ENCODE measurements at regions of chr1 and their contacts with region 1.

Region 1: DNA sequence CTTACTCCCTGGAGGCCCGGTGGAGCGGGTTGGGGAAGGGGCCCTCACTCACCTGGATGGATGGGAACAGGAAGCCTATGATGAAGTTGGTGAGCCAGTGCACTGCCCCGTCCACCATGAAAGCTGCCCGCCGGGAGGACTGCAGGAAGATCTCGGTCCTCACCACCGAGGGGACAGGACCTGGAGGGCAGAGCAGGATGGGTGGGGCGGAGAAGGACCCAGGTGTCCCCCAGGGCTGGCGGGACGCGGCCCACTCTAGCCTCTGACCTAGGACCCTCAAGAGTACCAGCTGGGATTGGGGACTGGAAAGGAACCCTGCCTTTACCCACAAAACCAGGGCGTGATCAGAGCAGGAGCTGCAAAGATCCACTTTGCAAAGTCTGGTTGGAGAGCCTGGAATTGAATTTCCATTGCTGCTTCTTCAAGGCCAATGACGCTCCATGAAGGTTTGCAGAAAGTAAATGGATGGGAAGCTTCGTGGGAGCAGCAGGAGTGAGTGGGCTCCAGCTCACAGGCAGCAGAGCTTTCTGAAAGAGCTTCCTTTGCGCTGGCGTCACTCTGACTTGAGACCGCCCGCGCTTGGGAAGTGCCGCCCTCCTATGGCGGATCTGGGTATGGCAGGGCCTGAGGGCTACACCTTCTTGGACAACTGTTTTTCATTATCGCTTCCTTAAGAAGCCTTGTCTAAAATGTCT is 21.4 kb downstream of the SLC2A7 start:
- DNase-seq: peak; percentile 92
- ATAC-seq: peak; percentile 87
- H3K4me3 Mint-ChIP-seq: peak overlapping the region; percentile 70
- H3K27ac Mint-ChIP-seq: peak overlapping the region; percentile 73
- H3K4me1 Mint-ChIP-seq: peaks cover 22% of the 10 kb centered on the region
- H3K27me3 Mint-ChIP-seq: peaks cover 9% of the 10 kb centered on the region

Region 2: DNA sequence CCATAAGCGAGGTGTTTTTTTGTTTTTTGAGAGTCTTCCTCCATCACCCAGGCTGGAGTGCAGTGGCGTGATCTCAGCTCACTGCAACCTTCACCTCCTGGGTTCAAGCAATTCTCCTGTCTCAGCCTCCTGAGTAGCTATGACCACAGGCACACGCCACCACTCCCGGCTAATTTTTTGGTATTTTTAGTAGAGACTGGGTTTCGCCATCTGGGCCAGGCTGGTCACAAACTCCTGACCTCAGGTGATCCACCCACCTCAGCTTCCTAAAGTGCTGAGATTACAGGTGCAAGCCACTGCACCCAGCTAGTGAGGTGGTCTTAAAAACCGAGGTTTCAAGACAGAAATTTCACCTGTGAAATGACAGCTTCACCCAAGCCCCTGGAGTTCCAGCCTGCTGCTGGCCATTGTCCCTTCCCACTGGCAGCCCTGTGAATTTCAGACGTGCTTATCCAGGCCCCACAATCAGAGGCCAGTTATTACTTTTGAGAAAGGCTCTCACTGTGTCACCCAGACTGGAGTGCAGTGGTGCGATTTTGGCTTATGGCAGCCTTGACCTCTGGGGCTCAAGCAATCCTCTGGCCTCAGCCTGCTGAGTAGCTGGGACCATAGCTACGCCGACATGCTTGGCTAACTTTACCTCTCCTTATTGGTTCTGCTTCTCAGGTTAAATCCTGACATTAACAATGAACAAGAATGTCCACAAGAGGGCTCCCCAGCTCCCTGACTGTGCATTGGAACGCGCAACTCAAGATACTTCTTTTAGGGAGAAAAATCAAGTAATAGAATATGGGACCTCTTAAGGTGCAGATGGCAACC is 145.8 kb before region 1 on chr1:
- CTCF ChIA-PET with region 1: interaction called, 155 read pairs
- POLR2A ChIA-PET with region 1: interaction called, 4 read pairs
- DNase-seq: peak; percentile 74
- ATAC-seq: peak; percentile 52
- H3K4me3 Mint-ChIP-seq: peak overlapping the region; percentile 42
- H3K27ac Mint-ChIP-seq: peak overlapping the region; percentile 77
- H3K4me1 Mint-ChIP-seq: peaks cover 64% of the 10 kb centered on the region
- H3K27me3 Mint-ChIP-seq: no peaks in the 10 kb centered on the region

Region 3: DNA sequence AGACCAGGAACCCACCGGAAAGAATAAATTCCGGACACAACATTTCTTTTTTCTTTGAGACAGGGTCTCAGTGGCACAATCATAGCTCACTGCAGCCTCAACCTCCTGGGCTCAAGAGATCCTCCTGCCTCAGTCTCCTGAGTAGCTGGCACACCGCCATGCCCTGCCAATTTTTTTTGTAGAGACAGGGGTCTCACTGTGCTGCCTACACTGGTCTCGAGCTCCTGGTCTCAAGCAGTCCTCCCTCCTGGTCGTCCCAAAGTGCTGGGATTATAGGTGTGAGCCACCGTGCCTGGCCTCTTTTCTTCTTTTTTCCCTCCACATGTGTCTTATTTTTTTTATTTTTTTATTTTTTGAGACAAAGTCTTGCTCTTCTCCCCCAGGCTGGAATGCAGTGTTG is 105.8 kb before region 1 on chr1:
- CTCF ChIA-PET with region 1: interaction called, 25 read pairs
- POLR2A ChIA-PET with region 1: no interaction called
- DNase-seq: no peak
- ATAC-seq: no peak
- H3K4me3 Mint-ChIP-seq: no peak overlapping the region
- H3K27ac Mint-ChIP-seq: peak overlapping the region; percentile 96
- H3K4me1 Mint-ChIP-seq: peaks cover 52% of the 10 kb centered on the region
- H3K27me3 Mint-ChIP-seq: no peaks in the 10 kb centered on the region

Region 4: GRCh38 chr1:8925406-8925805 is 79.4 kb before region 1 on chr1:
- CTCF ChIA-PET with region 1: interaction called, 288 read pairs
- POLR2A ChIA-PET with region 1: interaction called, 15 read pairs
- DNase-seq: no peak
- ATAC-seq: no peak
- H3K4me3 Mint-ChIP-seq: no peak overlapping the region
- H3K27ac Mint-ChIP-seq: no peak overlapping the region
- H3K4me1 Mint-ChIP-seq: peaks cover 39% of the 10 kb centered on the region
- H3K27me3 Mint-ChIP-seq: no peaks in the 10 kb centered on the region

Region 5: DNA sequence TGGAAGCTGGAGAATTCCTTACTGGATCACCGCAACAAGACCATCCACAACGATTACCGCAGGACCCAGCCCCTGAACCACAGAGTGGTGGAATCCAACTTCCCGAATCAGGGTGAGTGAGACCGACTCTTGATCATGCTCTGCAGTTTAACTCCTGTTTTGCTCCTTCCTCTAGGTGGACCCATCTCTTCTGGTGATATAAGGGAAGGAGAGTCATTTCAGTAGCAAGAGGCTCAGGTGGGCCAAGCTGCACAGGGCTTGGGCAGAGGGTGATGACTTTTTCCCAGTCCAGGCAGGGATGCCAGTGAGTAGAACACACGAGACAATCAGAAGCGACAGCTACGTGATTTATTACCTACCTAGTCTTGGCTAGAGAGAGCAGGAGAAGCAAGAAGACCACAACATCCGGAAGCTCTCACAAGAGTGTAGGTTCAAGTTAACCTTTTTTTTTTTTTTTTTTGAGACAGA is 33.9 kb before region 1 on chr1:
- CTCF ChIA-PET with region 1: interaction called, 44 read pairs
- POLR2A ChIA-PET with region 1: interaction called, 3 read pairs
- DNase-seq: peak; percentile 83
- ATAC-seq: peak; percentile 84
- H3K4me3 Mint-ChIP-seq: peak overlapping the region; percentile 99
- H3K27ac Mint-ChIP-seq: peak overlapping the region; percentile 98
- H3K4me1 Mint-ChIP-seq: peaks cover 32% of the 10 kb centered on the region
- H3K27me3 Mint-ChIP-seq: no peaks in the 10 kb centered on the region

Region 6: DNA sequence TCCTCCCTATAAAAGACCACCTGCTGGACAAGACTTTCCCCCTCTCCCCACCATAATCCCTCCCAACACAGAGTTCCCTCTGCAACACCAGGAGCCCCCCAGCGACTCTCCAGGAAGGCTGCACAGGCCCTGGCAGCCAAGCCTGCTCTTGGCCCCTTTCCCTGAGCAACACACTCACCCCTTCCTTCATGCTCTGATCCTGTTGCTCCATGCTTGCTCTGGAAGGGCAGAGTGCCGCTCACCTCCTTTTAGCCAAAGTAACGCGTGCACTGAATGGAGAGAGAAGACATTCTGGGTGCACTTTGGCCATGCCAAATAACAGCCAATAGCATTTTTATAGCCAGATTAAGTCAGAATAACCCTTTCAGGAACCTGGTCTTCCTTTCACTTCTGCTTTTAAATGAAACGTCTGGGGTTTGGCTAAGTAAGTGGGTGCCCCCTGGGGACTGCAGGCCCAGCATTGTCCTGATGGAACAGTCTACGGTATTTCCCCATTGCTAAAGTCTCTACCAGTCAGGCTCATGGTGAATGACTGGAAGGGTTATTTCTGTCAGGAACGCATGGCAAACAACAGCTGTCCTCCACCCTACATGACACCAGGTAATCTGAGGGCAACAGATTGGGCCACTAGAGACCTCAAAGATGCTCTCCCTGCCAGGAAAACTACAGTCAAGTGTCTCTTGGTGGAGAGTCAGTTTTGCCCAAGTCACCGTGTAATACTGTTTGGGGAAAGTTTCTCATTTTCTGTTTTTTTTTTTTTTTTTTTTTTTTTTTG is 64.7 kb after region 1 on chr1 and contains the start of gene SLC2A5:
- CTCF ChIA-PET with region 1: no interaction called
- POLR2A ChIA-PET with region 1: no interaction called
- DNase-seq: no peak
- ATAC-seq: no peak
- H3K4me3 Mint-ChIP-seq: no peak within 1 kb of the TSS
- H3K27ac Mint-ChIP-seq: no peak within 1 kb of the TSS
- H3K4me1 Mint-ChIP-seq: peaks cover 10% of the 10 kb centered on the region
- H3K27me3 Mint-ChIP-seq: peaks cover 37% of the 10 kb centered on the region
- total RNA-seq, gene SLC2A5: not detected

Region 7: GRCh38 chr1:9110669-9111356 is 106.0 kb after region 1 on chr1:
- CTCF ChIA-PET with region 1: interaction called, 10 read pairs
- POLR2A ChIA-PET with region 1: no interaction called
- DNase-seq: peak; percentile 90
- ATAC-seq: peak; percentile 82
- H3K4me3 Mint-ChIP-seq: no peak overlapping the region
- H3K27ac Mint-ChIP-seq: no peak overlapping the region
- H3K4me1 Mint-ChIP-seq: peaks cover 16% of the 10 kb centered on the region
- H3K27me3 Mint-ChIP-seq: no peaks in the 10 kb centered on the region

Measured in activated CD8-positive, alpha-beta T cell treated with anti-CD3 and anti-CD28 coated beads, Interleukin-2, amount 10 ng/mL, durations not matched to agents 7 days and 5 days (primary cell).